Activated CD4-positive, alpha-beta T cell treated with anti-CD3 and anti-CD28 coated beads for 36 hours (primary cell): ENCODE measurements at regions of chr3 and their contacts with region 1.

Region 1: DNA sequence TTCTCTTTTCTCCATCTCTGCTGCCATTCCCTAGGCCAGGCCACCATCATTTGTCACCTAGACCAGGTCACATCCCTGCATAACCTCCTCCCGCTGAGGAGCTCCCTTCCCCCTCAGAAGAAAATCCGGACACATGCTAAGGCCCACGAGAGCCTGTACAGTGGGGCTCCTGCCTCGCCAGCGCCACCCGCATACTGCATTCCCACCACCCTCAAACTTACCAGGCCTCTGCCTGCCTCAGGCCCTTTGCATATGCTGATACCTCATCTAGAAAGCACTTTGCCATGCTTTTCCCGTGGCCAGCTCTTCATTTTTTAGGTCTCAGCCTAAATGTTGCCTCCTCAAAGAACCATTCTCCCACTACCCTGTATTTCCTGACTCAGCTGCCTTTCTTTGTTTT is 220.1 kb upstream of the CTDSPL start:
- DNase-seq: no peak
- ATAC-seq: no peak
- H3K4me3 Mint-ChIP-seq: no peak overlapping the region
- H3K27ac Mint-ChIP-seq: no peak overlapping the region
- H3K4me1 Mint-ChIP-seq: no peaks in the 10 kb centered on the region
- H3K27me3 Mint-ChIP-seq: peaks cover 2% of the 10 kb centered on the region

Region 2: DNA sequence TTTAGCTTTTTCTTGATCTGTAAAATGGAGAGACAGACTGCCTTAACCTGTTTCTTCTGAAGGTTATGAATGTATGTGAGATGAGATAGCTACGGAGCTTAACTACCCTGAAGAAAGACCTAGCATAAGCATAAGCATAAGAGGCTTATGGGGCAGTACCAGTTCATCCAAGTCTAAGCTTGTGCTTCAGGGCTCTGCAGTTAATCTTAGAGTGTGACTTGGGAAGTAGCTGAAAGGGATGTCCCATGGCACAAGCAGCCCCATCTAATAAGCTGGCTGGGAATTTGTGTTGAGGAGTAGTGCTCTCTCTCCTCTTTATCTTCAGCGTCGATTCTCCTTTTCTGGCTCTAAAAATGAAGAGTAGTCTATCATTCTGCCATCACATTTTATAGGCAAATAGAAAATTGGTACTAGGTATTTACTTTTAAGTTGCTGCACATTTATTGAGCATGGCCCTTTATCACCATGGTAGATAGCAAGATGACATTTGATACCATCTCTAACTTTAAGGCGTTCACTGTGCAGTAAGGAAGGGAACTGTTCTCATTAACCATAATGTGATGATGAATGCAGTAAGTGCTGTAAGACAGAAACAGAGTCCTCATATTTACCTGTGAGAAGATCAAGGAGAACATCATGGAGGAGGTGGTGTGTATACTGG is 292.7 kb before region 1 on chr3:
- CTCF ChIA-PET with region 1: no interaction called
- POLR2A ChIA-PET with region 1: no interaction called
- intact Hi-C with region 1: no loop called
- DNase-seq: no peak
- ATAC-seq: no peak
- H3K4me3 Mint-ChIP-seq: no peak overlapping the region
- H3K27ac Mint-ChIP-seq: no peak overlapping the region
- H3K4me1 Mint-ChIP-seq: no peaks in the 10 kb centered on the region
- H3K27me3 Mint-ChIP-seq: no peaks in the 10 kb centered on the region

Region 3: GRCh38 chr3:37608061-37608702 is 33.4 kb before region 1 on chr3:
- CTCF ChIA-PET with region 1: no interaction called
- POLR2A ChIA-PET with region 1: no interaction called
- intact Hi-C with region 1: no loop called
- DNase-seq: no peak
- ATAC-seq: no peak
- H3K4me3 Mint-ChIP-seq: no peak overlapping the region
- H3K27ac Mint-ChIP-seq: no peak overlapping the region
- H3K4me1 Mint-ChIP-seq: no peaks in the 10 kb centered on the region
- H3K27me3 Mint-ChIP-seq: peaks cover 5% of the 10 kb centered on the region

Region 4: GRCh38 chr3:37806505-37807200 is 165.1 kb after region 1 on chr3:
- CTCF ChIA-PET with region 1: no interaction called
- POLR2A ChIA-PET with region 1: interaction called, 10 read pairs
- intact Hi-C with region 1: no loop called
- DNase-seq: peak; percentile 5
- ATAC-seq: peak; percentile 16
- H3K4me3 Mint-ChIP-seq: no peak overlapping the region
- H3K27ac Mint-ChIP-seq: no peak overlapping the region
- H3K4me1 Mint-ChIP-seq: peaks cover 10% of the 10 kb centered on the region
- H3K27me3 Mint-ChIP-seq: no peaks in the 10 kb centered on the region